ENCODE measurements at regions of chr3 and their contacts with region 1.

Region 1: GRCh38 chr3:5488771-5489170 is 301.3 kb downstream of the EDEM1 start:
- DNase-seq: no peak
- H3K4me3 ChIP-seq: no peak overlapping the region
- H3K27ac ChIP-seq: no peak overlapping the region
- H3K4me1 ChIP-seq: no peaks in the 10 kb centered on the region
- H3K27me3 ChIP-seq: no peaks in the 10 kb centered on the region
- CTCF ChIP-seq: no peak
- EP300 ChIP-seq: no peak
- POLR2A ChIP-seq: no peak
- RAD21 ChIP-seq: no peak

Region 2: GRCh38 chr3:5476403-5476802 is 12.4 kb before region 1 on chr3:
- CTCF ChIA-PET with region 1: interaction called, 11 read pairs
- POLR2A ChIA-PET with region 1: no interaction called
- DNase-seq: no peak
- H3K4me3 ChIP-seq: no peak overlapping the region
- H3K27ac ChIP-seq: no peak overlapping the region
- H3K4me1 ChIP-seq: no peaks in the 10 kb centered on the region
- H3K27me3 ChIP-seq: no peaks in the 10 kb centered on the region
- CTCF ChIP-seq: no peak
- EP300 ChIP-seq: no peak
- POLR2A ChIP-seq: no peak
- RAD21 ChIP-seq: peak in 1 of 2 experiments; percentile 16; a peak in 1 of 4 replicates

Region 3: DNA sequence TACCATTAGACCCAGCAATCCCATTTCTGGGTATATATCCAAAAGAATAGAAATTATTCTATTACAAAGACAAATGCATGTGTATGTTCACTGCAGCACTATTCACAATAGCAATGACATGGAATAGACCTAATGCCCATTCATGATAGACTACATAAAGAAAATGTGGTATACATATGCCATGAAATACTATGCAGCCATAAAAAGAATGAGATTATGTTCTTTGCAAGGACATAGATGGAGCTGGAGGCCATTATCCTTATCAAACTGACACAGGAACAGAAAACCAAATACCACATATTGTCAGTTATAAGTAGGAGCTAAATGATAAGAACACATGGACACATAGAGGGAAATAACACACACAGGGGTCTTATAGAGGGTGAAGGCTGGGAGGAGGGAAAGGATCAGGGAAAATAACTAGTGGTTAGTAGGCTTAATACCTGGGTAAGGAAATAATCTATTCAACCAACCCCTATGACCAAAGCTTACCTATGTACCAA is 65.5 kb after region 1 on chr3:
- CTCF ChIA-PET with region 1: no interaction called
- POLR2A ChIA-PET with region 1: no interaction called
- DNase-seq: no peak
- H3K4me3 ChIP-seq: no peak overlapping the region
- H3K27ac ChIP-seq: no peak overlapping the region
- H3K4me1 ChIP-seq: no peaks in the 10 kb centered on the region
- H3K27me3 ChIP-seq: no peaks in the 10 kb centered on the region
- CTCF ChIP-seq: no peak
- EP300 ChIP-seq: no peak
- POLR2A ChIP-seq: no peak
- RAD21 ChIP-seq: no peak

Measured in H1 (cell line).